Right lobe of liver (tissue), 6 donors: ENCODE measurements at regions of chr3 and their contacts with region 1.

Region 1: GRCh38 chr3:141280086-141280485 is 48.5 kb downstream of the PXYLP1 start:
- DNase-seq: no peak
- ATAC-seq: no peak
- H3K4me3 ChIP-seq: no peak overlapping the region
- H3K27ac ChIP-seq: no peak overlapping the region
- H3K4me1 ChIP-seq: peaks cover 0 to 7% (median 3%) of the 10 kb centered on the region in 4 donors
- H3K27me3 ChIP-seq: no peaks in the 10 kb centered on the region
- CTCF ChIP-seq: no peak
- POLR2A ChIP-seq: no peak

Region 2: DNA sequence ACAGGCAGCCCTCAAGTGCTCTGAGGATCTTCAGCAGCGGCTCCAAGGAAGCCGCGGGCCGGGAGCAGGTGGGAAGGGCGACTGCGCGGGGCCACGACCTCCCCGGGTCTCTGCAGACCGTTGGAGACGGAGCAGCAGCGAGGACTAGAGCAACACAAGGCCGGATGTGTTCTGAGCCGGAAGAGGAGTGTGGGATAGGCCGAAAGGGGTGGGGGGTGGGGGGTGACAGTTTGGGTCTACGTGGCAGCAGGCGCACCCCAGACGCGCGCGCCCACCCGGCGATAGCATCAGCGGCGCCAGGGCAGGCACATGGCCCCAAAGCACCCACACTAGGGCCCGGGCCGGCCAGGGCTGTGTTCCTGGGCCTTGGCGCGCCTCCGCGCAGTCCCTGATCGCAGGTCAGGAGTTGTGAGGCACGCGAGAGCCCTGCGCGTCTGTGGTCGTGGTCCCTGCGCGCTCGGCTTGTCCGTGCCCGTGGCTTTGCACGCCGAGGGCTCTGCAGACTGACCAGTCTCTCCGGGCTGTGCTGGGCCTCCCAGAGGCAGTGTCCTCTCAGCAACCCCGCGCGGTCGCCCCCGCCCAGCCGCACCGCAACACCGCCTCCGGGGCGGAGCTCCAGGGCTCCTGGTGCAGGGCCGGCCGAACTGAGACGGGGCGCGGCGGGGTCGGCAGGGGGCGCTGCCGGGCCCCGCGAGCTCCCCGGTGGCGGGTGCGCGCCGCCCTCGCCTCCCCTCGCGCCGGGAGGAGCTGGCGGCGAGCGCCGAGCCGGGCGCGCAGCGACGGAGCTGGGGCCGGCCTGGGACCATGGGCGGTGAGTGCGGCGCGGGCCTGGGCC is 48.8 kb before region 1 on chr3 and contains the start of gene PXYLP1:
- intact Hi-C with region 1: loop called (anchors 5 to 10 kb)
- DNase-seq: peak; percentile 95 to 96 (median 95)
- ATAC-seq: peak; percentile 91 to 96 (median 94)
- H3K4me3 ChIP-seq: peak within 1 kb of the TSS; percentile 66 to 76 (median 71)
- H3K27ac ChIP-seq: peak within 1 kb of the TSS; percentile 60 to 88 (median 85)
- H3K4me1 ChIP-seq: peaks cover 0 to 5% (median 0%) of the 10 kb centered on the region in 4 donors
- H3K27me3 ChIP-seq: no peaks in the 10 kb centered on the region
- CTCF ChIP-seq: peak; percentile 60 to 99 (median 74)
- POLR2A ChIP-seq: peak; percentile 81
- total RNA-seq, gene PXYLP1: 2.0 to 4.7 (median 3.0) TPM

Region 3: GRCh38 chr3:141237701-141238521 is 42.2 kb before region 1 on chr3:
- intact Hi-C with region 1: loop called (anchors 5 to 10 kb)
- DNase-seq: no peak
- ATAC-seq: no peak
- H3K4me3 ChIP-seq: no peak overlapping the region
- H3K27ac ChIP-seq: no peak overlapping the region
- H3K4me1 ChIP-seq: peaks cover 0 to 6% (median 0%) of the 10 kb centered on the region in 4 donors
- H3K27me3 ChIP-seq: no peaks in the 10 kb centered on the region
- CTCF ChIP-seq: no peak
- POLR2A ChIP-seq: no peak

Region 4: GRCh38 chr3:141331377-141332318 is 51.6 kb after region 1 on chr3:
- intact Hi-C with region 1: no loop called
- DNase-seq: no peak
- ATAC-seq: peak in 2 of 4 donors; percentile 17 to 78
- H3K4me3 ChIP-seq: no peak overlapping the region
- H3K27ac ChIP-seq: no peak overlapping the region
- H3K4me1 ChIP-seq: peaks cover 0 to 3% (median 0%) of the 10 kb centered on the region in 4 donors
- H3K27me3 ChIP-seq: no peaks in the 10 kb centered on the region
- CTCF ChIP-seq: no peak
- POLR2A ChIP-seq: no peak